ENCODE measurements at regions of chr17 and their contacts with region 1.

Region 1: GRCh38 chr17:49815761-49816281 is 27.3 kb downstream of the KAT7 start:
- DNase-seq: no peak
- ATAC-seq: no peak
- H3K4me3 ChIP-seq: no peak overlapping the region
- H3K4me3 Mint-ChIP-seq: peak overlapping the region in 1 of 3 donors; percentile 15
- H3K27ac ChIP-seq: peak overlapping the region; percentile 11
- H3K27ac Mint-ChIP-seq: peak overlapping the region; percentile 90 to 99
- H3K4me1 ChIP-seq: peaks cover 53 to 62% of the 10 kb centered on the region in 2 experiments
- H3K4me1 Mint-ChIP-seq: peaks cover 71 to 74% (median 74%) of the 10 kb centered on the region in 3 donors
- H3K27me3 ChIP-seq: no peaks in the 10 kb centered on the region
- H3K27me3 Mint-ChIP-seq: no peaks in the 10 kb centered on the region

Region 2: DNA sequence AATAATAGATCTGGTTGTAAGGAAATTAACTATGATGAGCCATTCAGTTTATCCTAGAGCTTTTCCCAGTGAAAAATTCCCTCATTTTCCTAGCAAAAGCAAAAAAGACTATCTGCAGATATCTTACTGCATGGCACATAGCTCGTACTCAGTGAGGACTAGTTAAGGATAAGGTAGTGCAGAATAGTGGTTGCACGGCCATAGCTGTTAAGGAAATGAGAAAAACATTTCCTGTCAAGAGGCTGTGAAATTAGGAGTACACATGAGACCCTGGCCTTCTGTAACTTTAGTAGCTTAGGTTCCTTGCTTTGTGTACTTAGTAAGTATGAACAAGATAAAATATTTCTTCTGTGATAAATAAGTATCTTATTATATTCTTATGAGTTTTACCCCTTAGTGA is 17.1 kb before region 1 on chr17:
- CTCF ChIA-PET with region 1: interaction called, 3 read pairs
- POLR2A ChIA-PET with region 1: interaction called in 1 of 2 experiments, 11 read pairs
- DNase-seq: no peak
- ATAC-seq: peak in 1 of 4 experiments; percentile 38
- H3K4me3 ChIP-seq: no peak overlapping the region
- H3K4me3 Mint-ChIP-seq: no peak overlapping the region
- H3K27ac ChIP-seq: no peak overlapping the region
- H3K27ac Mint-ChIP-seq: peak overlapping the region; percentile 69 to 78
- H3K4me1 ChIP-seq: peaks cover 10 to 28% of the 10 kb centered on the region in 2 experiments
- H3K4me1 Mint-ChIP-seq: peaks cover 55 to 56% (median 56%) of the 10 kb centered on the region in 3 donors
- H3K27me3 ChIP-seq: no peaks in the 10 kb centered on the region
- H3K27me3 Mint-ChIP-seq: no peaks in the 10 kb centered on the region

Measured in T-cell (primary cell).